GM12878 (cell line): ENCODE measurements at regions of chrX and their contacts with region 1.

Region 1: DNA sequence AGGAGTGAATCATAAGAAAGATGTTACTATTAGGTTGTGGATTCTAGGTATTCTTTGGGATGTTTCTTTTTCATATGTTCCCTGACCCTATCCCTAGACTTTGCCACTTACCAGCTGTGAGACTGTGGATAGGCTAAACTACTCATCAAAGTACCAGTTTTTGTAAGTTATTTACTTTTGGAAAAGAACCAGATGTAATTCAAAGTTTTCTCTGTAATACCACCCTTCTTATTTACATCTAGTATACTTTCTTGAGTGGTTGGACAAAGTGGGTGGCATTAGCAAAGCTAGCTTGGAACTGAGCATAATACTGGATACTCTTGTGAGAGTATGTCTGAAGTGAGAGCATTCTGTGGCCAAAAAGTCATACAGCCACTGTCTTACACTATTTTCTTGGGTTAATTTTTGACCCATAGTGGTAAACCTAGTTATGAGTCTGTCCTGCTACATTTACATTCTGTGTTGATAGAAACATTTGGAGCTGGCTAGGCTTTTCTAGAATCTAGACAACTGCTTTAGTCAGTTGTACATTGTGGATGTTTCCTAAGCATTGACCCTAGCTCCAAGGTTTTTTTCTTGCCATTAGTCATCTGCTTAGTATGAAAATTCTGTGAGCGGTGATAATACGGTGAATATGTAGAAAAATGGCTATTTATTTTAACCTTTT is 41.7 kb downstream of the KDM6A start:
- DNase-seq: no peak
- ATAC-seq: peak; percentile 94
- H3K4me3 ChIP-seq: no peak overlapping the region
- H3K27ac ChIP-seq: peak overlapping the region; percentile 30; the same call in 1 of the 2 replicates
- H3K4me1 ChIP-seq: peaks cover 7% of the 10 kb centered on the region; the same call in 1 of the 2 replicates
- H3K27me3 ChIP-seq: no peaks in the 10 kb centered on the region
- CTCF ChIP-seq: no peak
- EP300 ChIP-seq: no peak
- POLR2A ChIP-seq: no peak
- RAD21 ChIP-seq: no peak

Region 2: GRCh38 chrX:44898411-44899221 is 16.0 kb before region 1 on chrX:
- CTCF ChIA-PET with region 1: interaction called, 4 read pairs
- POLR2A ChIA-PET with region 1: interaction called, 6 read pairs
- RAD21 ChIA-PET with region 1: interaction called, 20 read pairs
- SMC1A ChIA-PET with region 1: interaction called, 28 read pairs
- in situ Hi-C with region 1: no loop called
- intact Hi-C with region 1: no loop called
- DNase-seq: no peak
- ATAC-seq: peak; percentile 74
- H3K4me3 ChIP-seq: no peak overlapping the region; the same call in 1 of the 2 replicates
- H3K27ac ChIP-seq: peak overlapping the region; percentile 70
- H3K4me1 ChIP-seq: peaks cover 16% of the 10 kb centered on the region
- H3K27me3 ChIP-seq: no peaks in the 10 kb centered on the region
- CTCF ChIP-seq: no peak
- EP300 ChIP-seq: no peak
- POLR2A ChIP-seq: no peak
- RAD21 ChIP-seq: no peak

Region 3: DNA sequence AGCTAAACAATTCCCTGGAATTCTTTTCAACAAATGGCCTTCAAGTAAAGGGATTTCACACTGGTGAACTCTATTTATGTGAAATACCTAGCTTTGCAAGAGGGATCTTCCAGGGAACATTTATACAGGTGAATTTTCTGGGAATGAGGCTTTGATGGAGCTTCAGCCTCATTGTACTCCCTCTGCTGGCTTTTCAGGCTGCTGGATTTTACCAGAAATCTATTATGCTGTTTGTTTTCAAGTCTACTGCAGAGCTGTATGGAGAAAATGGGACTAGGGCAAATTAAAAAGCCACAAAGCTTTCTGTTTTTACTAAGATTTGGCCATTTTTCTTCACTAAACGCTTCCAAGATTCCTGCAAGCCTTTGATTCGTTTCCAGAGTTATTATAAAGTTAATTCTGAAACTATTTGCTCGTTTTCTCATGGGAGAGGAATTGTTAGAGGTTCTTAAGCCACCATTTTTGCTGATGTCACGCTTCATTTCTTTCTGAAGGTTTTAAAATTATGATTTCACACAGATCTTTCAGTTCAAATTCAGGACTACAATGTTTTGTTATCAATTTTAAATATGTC is 10.0 kb before region 1 on chrX:
- CTCF ChIA-PET with region 1: interaction called, 6 read pairs
- POLR2A ChIA-PET with region 1: interaction called, 17 read pairs
- RAD21 ChIA-PET with region 1: interaction called, 20 read pairs
- SMC1A ChIA-PET with region 1: interaction called, 28 read pairs
- in situ Hi-C with region 1: no loop called
- intact Hi-C with region 1: no loop called
- DNase-seq: no peak
- ATAC-seq: no peak
- H3K4me3 ChIP-seq: peak overlapping the region; percentile 53
- H3K27ac ChIP-seq: peak overlapping the region; percentile 73
- H3K4me1 ChIP-seq: peaks cover 42% of the 10 kb centered on the region
- H3K27me3 ChIP-seq: no peaks in the 10 kb centered on the region
- CTCF ChIP-seq: peak in 1 of 3 experiments; percentile 16; a peak in 1 of 6 replicates
- EP300 ChIP-seq: no peak
- POLR2A ChIP-seq: no peak
- RAD21 ChIP-seq: no peak